Posterior cingulate gyrus (tissue), 11 donors: ENCODE measurements at regions of chr9 and their contacts with region 1.

Region 1: GRCh38 chr9:20941174-20941690 is 90.2 kb downstream of the HACD4 start:
- DNase-seq: peak in 7 of 10 donors; percentile 21 to 88 (median 54)

Region 2: DNA sequence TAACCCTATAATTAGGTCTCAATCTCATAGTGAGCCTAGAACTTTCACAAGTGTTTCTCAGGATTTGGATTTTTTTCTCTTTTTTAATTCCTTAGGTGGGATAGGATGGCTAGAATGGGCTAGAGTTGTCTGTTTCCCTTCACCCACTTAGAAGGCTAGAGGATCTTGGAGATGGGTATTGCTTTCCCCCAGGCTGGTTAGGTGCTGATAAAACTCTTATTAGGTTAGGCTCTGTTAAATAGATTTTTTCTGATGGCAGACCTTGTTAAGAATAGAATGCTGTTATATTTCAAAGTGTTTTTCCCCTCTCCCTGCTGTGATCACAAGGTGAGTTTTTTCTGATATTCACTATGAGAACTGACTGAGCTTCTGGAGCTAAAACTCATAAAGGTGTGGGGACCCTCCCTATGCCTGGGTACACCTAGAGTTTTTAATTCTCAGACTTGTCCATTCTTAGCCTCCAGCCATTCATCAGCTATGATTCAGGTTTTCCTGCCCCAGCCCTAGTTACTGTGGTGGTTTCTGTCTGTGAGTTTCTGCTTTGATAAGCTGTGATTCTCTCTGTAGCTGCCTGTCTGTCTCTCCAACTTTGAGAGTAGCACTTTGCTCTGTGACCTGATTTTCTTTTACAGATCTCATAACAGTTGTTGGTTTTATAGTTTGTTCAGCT is 42.2 kb before region 1 on chr9:
- intact Hi-C with region 1: no loop called
- DNase-seq: no peak

Region 3: GRCh38 chr9:21039302-21039701 is 98.1 kb after region 1 on chr9:
- intact Hi-C with region 1: no loop called
- DNase-seq: no peak

Region 4: DNA sequence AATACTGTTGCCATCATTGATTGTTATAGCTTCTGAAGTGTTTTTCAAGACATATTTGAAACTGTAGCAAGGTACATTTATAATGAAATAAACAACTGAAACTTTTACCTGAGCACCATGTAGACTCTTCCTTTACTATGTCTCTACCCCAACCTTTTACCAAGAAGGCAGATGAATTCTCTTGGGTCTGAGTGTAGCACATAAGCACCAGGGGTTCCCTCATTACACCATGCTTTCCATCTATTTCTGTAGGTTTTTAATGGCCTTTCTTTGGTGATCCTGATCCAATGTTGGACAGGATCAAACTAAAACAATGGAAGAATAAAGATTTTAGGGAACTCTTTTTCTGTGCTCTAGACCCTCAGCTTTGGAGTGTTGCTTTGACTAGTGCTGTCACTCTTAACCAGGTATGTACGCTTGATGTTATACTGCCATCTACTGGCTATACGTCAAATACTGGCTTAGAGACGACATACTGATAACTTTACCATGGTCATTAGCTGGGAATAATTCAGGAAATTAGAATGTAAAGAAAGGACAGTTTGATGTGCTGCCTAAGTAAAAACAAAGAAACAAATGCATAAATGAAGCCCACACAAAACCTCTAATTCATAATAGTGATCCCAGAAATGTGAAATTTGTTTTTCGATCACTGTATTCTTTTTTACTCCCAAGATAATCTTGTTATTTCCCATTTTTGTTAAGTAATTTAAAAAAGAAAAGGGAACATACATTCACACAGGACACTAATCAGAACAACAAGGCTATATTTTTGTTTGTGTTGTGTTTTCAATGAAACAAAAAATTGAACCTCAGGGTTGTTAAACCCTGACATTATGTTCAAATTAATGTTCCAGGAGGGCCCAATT is 169.7 kb after region 1 on chr9:
- intact Hi-C with region 1: loop called (anchors 5 kb)
- DNase-seq: no peak